ENCODE measurements at regions of chr3 and their contacts with region 1.

Region 1: DNA sequence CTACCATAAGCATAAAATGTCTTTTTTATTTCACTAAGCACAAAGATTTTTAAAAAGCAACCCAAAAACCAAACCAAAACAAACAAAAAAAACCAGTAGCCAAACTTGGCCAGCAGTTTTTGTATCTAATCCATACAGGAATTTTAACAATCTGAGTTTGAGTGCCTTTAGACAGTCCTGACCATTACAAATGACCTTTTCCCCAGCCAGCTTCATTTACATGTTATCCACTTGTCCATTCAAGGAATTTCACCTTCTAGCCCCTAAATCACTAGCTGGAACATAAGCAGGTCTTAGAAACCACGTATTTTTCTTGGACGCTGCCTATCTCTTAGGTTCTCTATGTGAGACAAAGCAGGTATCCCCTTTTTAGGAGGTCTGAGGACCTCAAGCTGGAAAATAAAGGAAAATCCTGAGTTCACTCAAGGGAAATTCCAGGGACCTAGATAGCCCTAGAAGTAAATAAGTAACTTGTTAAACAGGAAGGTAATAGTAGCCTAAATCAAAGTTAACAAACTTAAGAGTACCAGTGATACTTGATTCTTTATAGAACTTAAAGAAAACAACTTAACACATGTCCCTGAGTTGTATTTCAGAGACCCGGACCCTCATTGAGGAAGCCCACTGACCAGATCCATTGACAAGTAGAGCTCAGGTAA is 34.2 kb downstream of the CIP2A start:
- DNase-seq: peak in 2 of 5 donors; percentile 24 to 39
- H3K4me3 ChIP-seq: peak overlapping the region; percentile 4 to 60 (median 36)
- H3K27ac ChIP-seq: peak overlapping the region; percentile 71 to 83
- H3K4me1 ChIP-seq: peaks cover 0 to 3% (median 0%) of the 10 kb centered on the region in 3 donors
- H3K27me3 ChIP-seq: no peaks in the 10 kb centered on the region
- CTCF ChIP-seq: no peak

Region 2: DNA sequence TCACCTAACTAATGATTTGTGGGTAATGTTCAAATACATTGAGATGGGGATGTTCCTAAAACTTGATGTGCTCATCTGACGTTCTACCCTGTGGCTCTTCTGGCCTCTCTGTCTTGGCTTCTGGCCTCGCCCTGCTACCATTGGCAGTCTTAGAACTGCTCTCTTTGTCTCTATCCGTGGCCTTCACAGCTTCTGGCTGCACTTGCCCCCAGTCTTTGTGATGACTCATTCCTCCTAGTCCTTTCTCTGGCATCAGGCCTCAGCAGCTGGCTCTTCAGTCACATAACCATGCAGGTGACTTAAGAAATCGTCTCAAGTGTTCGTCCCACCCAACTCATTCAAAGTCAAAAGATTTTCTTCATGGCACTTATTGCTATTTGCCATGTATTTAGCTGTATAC is 844.2 kb before region 1 on chr3:
- intact Hi-C with region 1: no loop called
- DNase-seq: no peak
- H3K4me3 ChIP-seq: no peak overlapping the region
- H3K27ac ChIP-seq: no peak overlapping the region
- H3K4me1 ChIP-seq: no peaks in the 10 kb centered on the region
- H3K27me3 ChIP-seq: no peaks in the 10 kb centered on the region
- CTCF ChIP-seq: no peak

Region 3: GRCh38 chr3:108137460-108137814 is 417.6 kb before region 1 on chr3:
- intact Hi-C with region 1: no loop called
- DNase-seq: no peak
- H3K4me3 ChIP-seq: no peak overlapping the region
- H3K27ac ChIP-seq: no peak overlapping the region
- H3K4me1 ChIP-seq: no peaks in the 10 kb centered on the region
- H3K27me3 ChIP-seq: no peaks in the 10 kb centered on the region
- CTCF ChIP-seq: no peak

Region 4: DNA sequence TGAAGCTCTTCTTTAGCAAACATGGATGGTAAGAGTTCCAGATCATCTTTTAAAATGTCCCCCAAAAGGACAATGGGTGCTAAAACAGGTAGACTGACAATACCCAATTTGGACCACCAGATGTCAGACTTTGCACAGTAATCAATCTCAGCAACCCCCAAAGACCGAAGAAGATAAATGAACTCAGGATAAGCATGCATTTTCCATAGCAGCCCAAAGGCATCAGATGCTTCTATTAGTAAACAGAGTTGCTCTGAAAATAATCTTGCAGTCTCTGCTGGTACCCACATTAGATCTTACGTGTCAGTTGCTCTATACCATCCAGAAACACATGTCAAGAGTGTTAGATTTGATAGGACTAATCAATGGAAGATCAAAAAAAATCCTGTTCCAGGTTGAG is 65.3 kb before region 1 on chr3:
- intact Hi-C with region 1: loop called (anchors 5 kb)
- DNase-seq: peak in 3 of 5 donors; percentile 42 to 77 (median 76)
- H3K4me3 ChIP-seq: peak overlapping the region in 1 of 3 donors; percentile 15
- H3K27ac ChIP-seq: no peak overlapping the region
- H3K4me1 ChIP-seq: peaks cover 0 to 4% (median 0%) of the 10 kb centered on the region in 3 donors
- H3K27me3 ChIP-seq: no peaks in the 10 kb centered on the region
- CTCF ChIP-seq: peak; percentile 74

Region 5: GRCh38 chr3:108845709-108846293 is 290.8 kb after region 1 on chr3:
- intact Hi-C with region 1: no loop called
- DNase-seq: no peak
- H3K4me3 ChIP-seq: no peak overlapping the region
- H3K27ac ChIP-seq: no peak overlapping the region
- H3K4me1 ChIP-seq: no peaks in the 10 kb centered on the region
- H3K27me3 ChIP-seq: no peaks in the 10 kb centered on the region
- CTCF ChIP-seq: no peak